ENCODE measurements at regions of chr9 and their contacts with region 1.

Region 1: GRCh38 chr9:127955294-127956035 is 17.8 kb upstream of the DPM2 start:
- DNase-seq: peak; percentile 78 to 85 (median 78)
- ATAC-seq: peak; percentile 93
- H3K4me3 ChIP-seq: no peak overlapping the region
- H3K27ac ChIP-seq: no peak overlapping the region
- H3K4me1 ChIP-seq: peaks cover 26 to 45% of the 10 kb centered on the region in 2 experiments
- H3K27me3 ChIP-seq: no peaks in the 10 kb centered on the region
- CTCF ChIP-seq: peak; percentile 59 to 75 (median 62)
- EP300 ChIP-seq: peak; percentile 38; the same call in 1 of the 2 replicates
- POLR2A ChIP-seq: no peak
- RAD21 ChIP-seq: peak; percentile 45 to 71

Region 2: GRCh38 chr9:127943731-127944144 is 11.7 kb before region 1 on chr9:
- CTCF ChIA-PET with region 1: no interaction called
- POLR2A ChIA-PET with region 1: interaction called, 10 read pairs
- in situ Hi-C with region 1: no loop called
- intact Hi-C with region 1: no loop called
- DNase-seq: peak; percentile 82 to 89 (median 84)
- ATAC-seq: peak; percentile 88
- H3K4me3 ChIP-seq: no peak overlapping the region
- H3K27ac ChIP-seq: peak overlapping the region; percentile 19; the same call in 1 of the 3 replicates
- H3K4me1 ChIP-seq: peaks cover 38 to 65% of the 10 kb centered on the region in 2 experiments
- H3K27me3 ChIP-seq: no peaks in the 10 kb centered on the region
- CTCF ChIP-seq: peak; percentile 93 to 95 (median 94)
- EP300 ChIP-seq: no peak
- POLR2A ChIP-seq: no peak
- RAD21 ChIP-seq: peak; percentile 94 to 97

Region 3: GRCh38 chr9:127970401-127971313 is 15.2 kb after region 1 on chr9:
- CTCF ChIA-PET with region 1: no interaction called
- POLR2A ChIA-PET with region 1: interaction called, 18 read pairs
- in situ Hi-C with region 1: no loop called
- intact Hi-C with region 1: no loop called
- DNase-seq: no peak
- ATAC-seq: no peak
- H3K4me3 ChIP-seq: no peak overlapping the region
- H3K27ac ChIP-seq: no peak overlapping the region
- H3K4me1 ChIP-seq: peaks cover 38 to 88% of the 10 kb centered on the region in 2 experiments
- H3K27me3 ChIP-seq: no peaks in the 10 kb centered on the region
- CTCF ChIP-seq: no peak
- EP300 ChIP-seq: no peak
- POLR2A ChIP-seq: no peak
- RAD21 ChIP-seq: no peak

Measured in K562 (cell line).